ENCODE measurements at regions of chr17 and their contacts with region 1.

Region 1: GRCh38 chr17:74379495-74380085 is 12.3 kb downstream of the GPR142 start:
- DNase-seq: peak; percentile 98
- ATAC-seq: peak; percentile 93
- H3K4me3 Mint-ChIP-seq: no peak overlapping the region
- H3K27ac Mint-ChIP-seq: no peak overlapping the region
- H3K4me1 Mint-ChIP-seq: peaks cover 13% of the 10 kb centered on the region
- H3K27me3 Mint-ChIP-seq: no peaks in the 10 kb centered on the region; the same call in 1 of the 2 replicates
- CTCF ChIP-seq: peak; percentile 94

Region 2: GRCh38 chr17:74235040-74235581 is 144.5 kb before region 1 on chr17:
- CTCF ChIA-PET with region 1: no interaction called
- POLR2A ChIA-PET with region 1: no interaction called
- DNase-seq: no peak
- ATAC-seq: no peak
- H3K4me3 Mint-ChIP-seq: no peak overlapping the region
- H3K27ac Mint-ChIP-seq: no peak overlapping the region
- H3K4me1 Mint-ChIP-seq: peaks cover 16% of the 10 kb centered on the region
- H3K27me3 Mint-ChIP-seq: no peaks in the 10 kb centered on the region
- CTCF ChIP-seq: no peak

Region 3: GRCh38 chr17:74280093-74280513 is 99.5 kb before region 1 on chr17:
- CTCF ChIA-PET with region 1: interaction called, 16 read pairs
- POLR2A ChIA-PET with region 1: no interaction called
- DNase-seq: no peak
- ATAC-seq: no peak
- H3K4me3 Mint-ChIP-seq: no peak overlapping the region
- H3K27ac Mint-ChIP-seq: peak overlapping the region; percentile 27; the same call in 1 of the 2 replicates
- H3K4me1 Mint-ChIP-seq: peaks cover 4% of the 10 kb centered on the region; the same call in 1 of the 2 replicates
- H3K27me3 Mint-ChIP-seq: peaks cover 9% of the 10 kb centered on the region
- CTCF ChIP-seq: no peak

Region 4: GRCh38 chr17:74368092-74369081 is 11.2 kb before region 1 on chr17:
- CTCF ChIA-PET with region 1: interaction called, 138 read pairs
- POLR2A ChIA-PET with region 1: no interaction called
- DNase-seq: peak; percentile 79
- ATAC-seq: peak; percentile 81
- H3K4me3 Mint-ChIP-seq: no peak overlapping the region
- H3K27ac Mint-ChIP-seq: no peak overlapping the region
- H3K4me1 Mint-ChIP-seq: peaks cover 9% of the 10 kb centered on the region
- H3K27me3 Mint-ChIP-seq: peaks cover 2% of the 10 kb centered on the region; the same call in 1 of the 2 replicates
- CTCF ChIP-seq: peak; percentile 95

Region 5: DNA sequence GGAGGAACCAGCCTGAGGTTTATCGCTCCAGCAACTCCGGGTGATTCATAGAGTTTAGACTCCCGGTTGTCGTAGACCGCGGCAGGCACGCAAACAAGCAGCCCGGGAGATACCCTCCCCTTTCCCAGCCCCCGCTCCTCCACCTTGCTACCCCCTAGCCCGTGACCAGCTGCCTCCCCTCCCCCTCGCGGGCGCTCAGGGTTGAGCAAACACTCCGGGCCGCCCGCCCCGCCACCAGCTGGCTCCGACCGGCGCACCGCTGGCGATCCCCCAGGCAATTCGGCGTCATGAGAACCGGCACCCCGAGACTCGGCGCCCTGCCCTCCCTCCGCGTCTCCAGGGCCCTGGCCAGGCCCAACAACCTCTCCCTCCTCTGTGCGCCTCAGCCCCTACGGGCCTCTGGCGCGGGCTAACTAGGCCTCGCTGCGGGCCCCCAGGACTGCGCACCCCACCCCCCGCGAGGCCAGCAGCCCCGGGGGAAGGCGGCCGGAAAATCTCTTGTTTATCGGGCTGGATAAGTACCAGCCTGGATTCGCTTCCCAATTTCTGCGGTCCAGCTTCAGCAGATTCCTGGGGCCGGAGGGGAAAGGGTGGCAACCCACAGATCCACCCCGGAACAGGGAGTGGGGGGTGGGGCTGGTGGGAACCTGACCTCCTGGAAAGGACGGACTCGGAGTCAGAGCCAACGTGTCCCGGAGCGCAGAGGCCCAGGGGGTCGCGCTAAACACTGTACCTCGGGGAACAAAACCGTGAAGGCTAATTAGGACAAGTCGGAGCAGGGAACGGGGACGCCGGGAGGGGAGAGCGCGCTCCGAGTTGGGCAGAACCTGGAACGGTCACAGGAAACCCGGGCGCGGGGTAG is 51.3 kb after region 1 on chr17:
- CTCF ChIA-PET with region 1: interaction called, 51 read pairs
- POLR2A ChIA-PET with region 1: interaction called, 3 read pairs
- DNase-seq: peak; percentile 77
- ATAC-seq: peak; percentile 7
- H3K4me3 Mint-ChIP-seq: peak overlapping the region; percentile 84
- H3K27ac Mint-ChIP-seq: peak overlapping the region; percentile 53
- H3K4me1 Mint-ChIP-seq: peaks cover 39% of the 10 kb centered on the region
- H3K27me3 Mint-ChIP-seq: peaks cover 37% of the 10 kb centered on the region
- CTCF ChIP-seq: no peak

Region 6: DNA sequence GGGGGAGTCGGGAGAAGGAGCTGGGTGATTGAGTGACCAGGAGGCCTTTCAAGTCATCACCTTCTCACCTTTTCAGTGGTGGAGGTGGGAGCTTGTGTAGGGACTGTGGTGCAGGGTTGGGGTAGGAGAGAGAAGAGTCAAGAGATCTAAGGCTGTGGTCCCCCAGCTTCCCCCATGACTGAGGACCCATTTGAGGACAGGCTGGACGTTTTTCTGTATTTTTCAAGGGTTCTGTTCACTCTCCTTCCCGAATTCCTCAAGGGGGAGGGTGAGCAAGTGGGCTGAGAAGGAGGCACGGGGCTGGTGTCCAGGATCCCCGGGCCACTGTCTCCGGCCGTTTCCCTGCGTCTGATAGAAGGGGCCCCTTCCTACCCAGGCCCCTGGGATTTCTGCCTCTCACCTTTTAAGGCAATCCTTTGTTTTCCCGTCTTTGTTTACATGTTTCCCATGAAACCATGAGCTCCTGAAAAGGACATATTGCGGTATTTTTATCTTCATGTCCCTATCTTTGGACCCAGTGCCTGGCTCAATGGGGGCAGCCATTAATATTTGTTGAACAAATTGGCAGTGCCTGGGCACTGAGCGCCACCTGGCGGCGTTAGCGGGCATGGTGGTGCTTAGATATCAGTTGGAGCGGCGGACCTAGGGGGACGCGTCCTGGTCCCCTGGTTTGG is 77.7 kb after region 1 on chr17:
- CTCF ChIA-PET with region 1: interaction called, 16 read pairs
- POLR2A ChIA-PET with region 1: interaction called, 14 read pairs
- DNase-seq: peak; percentile 86
- ATAC-seq: peak; percentile 13
- H3K4me3 Mint-ChIP-seq: no peak overlapping the region
- H3K27ac Mint-ChIP-seq: no peak overlapping the region
- H3K4me1 Mint-ChIP-seq: peaks cover 36% of the 10 kb centered on the region
- H3K27me3 Mint-ChIP-seq: peaks cover 21% of the 10 kb centered on the region
- CTCF ChIP-seq: peak; percentile 89

Region 7: GRCh38 chr17:74566132-74566753 is 186.7 kb after region 1 on chr17:
- CTCF ChIA-PET with region 1: interaction called, 23 read pairs
- POLR2A ChIA-PET with region 1: no interaction called
- DNase-seq: peak; percentile 82
- ATAC-seq: peak; percentile 96
- H3K4me3 Mint-ChIP-seq: no peak overlapping the region
- H3K27ac Mint-ChIP-seq: no peak overlapping the region
- H3K4me1 Mint-ChIP-seq: peaks cover 7% of the 10 kb centered on the region; the same call in 1 of the 2 replicates
- H3K27me3 Mint-ChIP-seq: peaks cover 18% of the 10 kb centered on the region
- CTCF ChIP-seq: peak; percentile 77

Measured in WTC11 (cell line).